Psoas muscle (tissue), 8 donors: ENCODE measurements at regions of chr2 and their contacts with region 1.

Region 1: GRCh38 chr2:74147727-74148456 is at the start of gene BOLA3:
- DNase-seq: peak; percentile 89 to 92
- ATAC-seq: peak; percentile 95 to 99 (median 98)
- H3K4me3 ChIP-seq: peak within 1 kb of the TSS; percentile 89
- H3K27ac ChIP-seq: peak within 1 kb of the TSS; percentile 70
- H3K4me1 ChIP-seq: peaks cover 13% of the 10 kb centered on the region
- H3K27me3 ChIP-seq: no peaks in the 10 kb centered on the region
- CTCF ChIP-seq: peak; percentile 66
- total RNA-seq, gene BOLA3: 47.7 to 65.9 (median 54.3) TPM

Region 2: DNA sequence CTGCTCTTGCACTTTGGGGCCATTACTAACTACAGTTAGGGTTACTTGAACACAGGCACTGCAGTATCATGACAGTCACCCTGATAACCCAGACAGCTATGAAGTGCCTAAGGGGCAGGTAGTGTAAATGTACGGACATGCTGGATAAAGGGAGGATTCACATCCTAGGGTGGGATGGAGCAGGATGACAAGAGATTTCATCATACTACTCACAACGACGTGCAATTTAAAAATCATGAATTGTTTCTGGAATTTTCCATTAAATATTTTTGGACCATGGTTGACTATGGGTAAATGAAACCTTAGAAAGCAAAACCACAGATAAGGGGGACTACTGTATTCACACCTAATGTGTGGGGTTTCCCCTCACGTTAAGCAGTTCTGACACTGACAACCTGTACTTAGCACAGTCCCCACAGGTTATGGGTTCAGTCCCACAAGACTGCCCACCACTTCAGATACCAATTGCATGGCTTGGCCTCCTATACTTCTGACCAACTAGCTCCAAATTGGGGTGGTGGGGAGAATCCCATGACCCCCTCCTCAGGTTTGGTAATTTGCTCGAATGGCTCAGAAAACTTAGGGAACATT is 581.5 kb before region 1 on chr2:
- intact Hi-C with region 1: no loop called
- DNase-seq: no peak
- ATAC-seq: no peak
- H3K4me3 ChIP-seq: no peak overlapping the region
- H3K27ac ChIP-seq: no peak overlapping the region
- H3K4me1 ChIP-seq: no peaks in the 10 kb centered on the region
- H3K27me3 ChIP-seq: no peaks in the 10 kb centered on the region
- CTCF ChIP-seq: no peak

Region 3: DNA sequence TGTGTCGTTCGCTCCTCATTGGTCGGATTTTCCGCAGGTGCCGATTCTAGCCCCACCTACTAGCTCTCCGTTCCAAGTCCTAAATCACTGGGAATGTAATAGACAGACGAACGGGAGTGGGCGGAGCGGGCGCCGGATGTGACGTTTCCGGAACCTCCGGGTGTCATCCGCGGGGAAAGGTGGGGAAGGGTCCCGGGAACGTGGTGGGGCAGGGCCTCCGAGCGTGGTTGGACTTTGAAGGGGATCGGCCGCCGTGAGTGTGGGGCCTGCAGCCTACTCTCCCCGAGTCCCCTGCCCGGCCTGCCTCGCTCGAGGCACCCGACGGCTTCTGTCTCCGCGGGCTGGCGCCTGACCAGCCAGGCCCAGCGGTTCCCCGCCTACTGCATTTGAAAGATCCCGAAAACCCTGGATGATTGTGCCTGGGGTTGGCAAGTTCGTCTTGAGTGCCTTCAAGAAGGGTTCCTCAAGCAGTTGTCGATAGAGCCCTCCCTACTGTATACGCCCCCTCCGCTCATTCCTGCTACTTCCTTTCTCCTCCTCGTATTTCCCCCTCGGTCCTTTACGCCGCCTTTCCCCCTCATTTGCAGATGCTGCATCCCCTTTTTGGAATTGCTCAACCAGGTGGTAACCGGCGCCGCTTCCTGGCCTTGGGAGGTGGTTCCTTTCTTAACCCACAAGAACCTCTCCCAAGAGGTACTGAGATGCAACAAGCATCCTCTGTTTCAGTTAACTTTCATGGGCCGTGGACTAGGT is 318.9 kb before region 1 on chr2 and contains the start of gene STAMBP:
- intact Hi-C with region 1: loop called in 1 of 2 experiments (anchors 10 kb)
- DNase-seq: peak; percentile 96 to 98
- ATAC-seq: peak; percentile 84 to 92 (median 90)
- H3K4me3 ChIP-seq: peak within 1 kb of the TSS; percentile 92
- H3K27ac ChIP-seq: peak within 1 kb of the TSS; percentile 99
- H3K4me1 ChIP-seq: peaks cover 44% of the 10 kb centered on the region
- H3K27me3 ChIP-seq: no peaks in the 10 kb centered on the region
- CTCF ChIP-seq: no peak
- total RNA-seq, gene STAMBP: 40.7 to 93.1 (median 57.8) TPM

Region 4: DNA sequence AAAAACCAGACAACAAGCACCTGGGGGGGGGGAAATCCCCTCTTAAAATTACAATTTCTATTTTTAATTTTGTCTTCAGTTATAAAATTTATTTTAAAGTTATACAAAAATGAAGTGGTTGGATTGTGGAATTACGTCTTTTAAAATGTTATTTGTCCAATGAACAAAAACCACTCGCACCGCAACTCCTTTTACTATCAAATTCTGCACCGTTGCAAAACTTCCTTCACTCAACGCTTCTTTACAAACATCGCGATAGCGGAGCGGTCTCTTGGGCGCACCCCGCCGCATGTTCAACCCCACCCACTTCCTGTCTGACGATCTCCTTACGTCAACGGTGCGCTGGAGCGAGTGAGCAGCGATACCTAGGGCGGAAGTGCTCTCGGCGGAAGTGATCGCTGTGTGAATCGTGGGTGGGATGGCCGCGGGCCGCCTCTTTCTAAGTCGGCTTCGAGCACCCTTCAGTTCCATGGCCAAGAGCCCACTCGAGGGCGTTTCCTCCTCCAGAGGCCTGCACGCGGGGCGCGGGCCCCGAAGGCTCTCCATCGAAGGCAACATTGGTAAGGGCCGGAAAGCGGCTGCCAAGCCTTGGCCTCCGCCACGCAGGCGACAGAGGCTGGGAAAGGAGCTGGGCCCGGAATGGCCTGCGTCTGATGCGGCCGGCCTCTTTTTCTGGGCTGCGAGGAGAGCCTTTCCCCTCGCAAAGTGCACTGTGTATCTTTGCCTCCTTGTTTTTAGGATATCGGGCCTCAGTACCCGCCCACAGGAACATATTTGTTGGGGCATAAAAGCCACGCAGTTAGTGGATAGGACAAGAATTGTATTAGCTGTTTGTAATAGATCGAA is 221.2 kb before region 1 on chr2 and contains the start of gene DGUOK:
- intact Hi-C with region 1: loop called in 1 of 2 experiments (anchors 10 kb)
- DNase-seq: peak; percentile 97 to 98
- ATAC-seq: peak; percentile 100
- H3K4me3 ChIP-seq: peak within 1 kb of the TSS; percentile 94
- H3K27ac ChIP-seq: peak within 1 kb of the TSS; percentile 94
- H3K4me1 ChIP-seq: peaks cover 21% of the 10 kb centered on the region
- H3K27me3 ChIP-seq: no peaks in the 10 kb centered on the region
- CTCF ChIP-seq: no peak
- total RNA-seq, gene DGUOK: 12.9 to 22.9 (median 20.7) TPM

Region 5: GRCh38 chr2:73939419-73939818 is 208.5 kb before region 1 on chr2:
- intact Hi-C with region 1: loop called in 1 of 2 experiments (anchors 5 kb)
- DNase-seq: peak in 1 of 2 donors; percentile 55
- ATAC-seq: peak; percentile 92 to 97 (median 96)
- H3K4me3 ChIP-seq: no peak overlapping the region
- H3K27ac ChIP-seq: peak overlapping the region; percentile 39
- H3K4me1 ChIP-seq: peaks cover 5% of the 10 kb centered on the region
- H3K27me3 ChIP-seq: no peaks in the 10 kb centered on the region
- CTCF ChIP-seq: peak; percentile 30

Region 6: DNA sequence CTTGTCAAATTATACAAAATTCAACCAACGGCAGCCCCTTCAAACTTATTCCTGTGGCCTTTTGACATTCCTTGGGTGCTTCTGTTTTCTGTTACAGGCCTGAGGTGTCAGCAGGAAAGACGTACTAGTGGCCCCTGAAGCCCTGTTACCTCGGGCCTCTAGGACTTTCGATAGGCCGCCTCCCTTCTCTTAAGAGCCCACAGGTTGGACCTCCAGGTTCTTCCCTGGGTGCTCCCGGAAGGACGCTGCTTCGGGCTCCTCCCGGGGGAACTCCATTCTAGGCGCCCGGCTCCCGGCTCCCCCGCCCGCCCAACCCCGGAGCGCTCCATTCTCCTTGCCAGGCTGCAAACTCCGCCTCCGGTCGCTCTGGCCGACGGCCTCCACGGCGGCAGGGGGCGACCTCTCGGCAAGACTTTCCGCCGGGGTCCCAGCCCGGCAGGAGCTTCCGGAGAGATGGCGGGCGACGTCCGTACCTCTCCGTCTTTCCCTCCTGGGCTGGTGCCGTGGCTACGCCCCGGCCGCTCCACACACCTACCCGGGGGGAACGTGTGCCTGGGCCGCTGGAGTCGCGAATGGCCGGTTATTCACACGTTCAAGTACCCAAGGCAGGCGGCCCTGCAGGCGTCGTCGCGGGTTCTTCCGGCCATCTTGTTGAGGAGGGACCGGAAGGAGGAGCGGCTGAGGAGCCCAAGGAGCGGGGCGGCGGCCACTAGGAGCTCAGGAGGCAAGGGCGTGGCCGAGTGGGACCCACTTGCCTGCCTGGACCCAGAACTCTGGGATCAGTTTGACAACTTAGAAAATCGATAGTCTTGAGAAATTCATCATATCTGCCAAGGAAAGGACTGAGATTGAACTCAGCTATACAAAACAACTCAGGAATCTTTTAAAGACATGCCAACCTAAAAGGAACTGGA is 27.7 kb before region 1 on chr2:
- intact Hi-C with region 1: loop called in 1 of 2 experiments (anchors 2 kb)
- DNase-seq: peak; percentile 81 to 82
- ATAC-seq: peak; percentile 86 to 97 (median 95)
- H3K4me3 ChIP-seq: peak overlapping the region; percentile 72
- H3K27ac ChIP-seq: peak overlapping the region; percentile 58
- H3K4me1 ChIP-seq: no peaks in the 10 kb centered on the region
- H3K27me3 ChIP-seq: no peaks in the 10 kb centered on the region
- CTCF ChIP-seq: peak; percentile 45

Region 7: DNA sequence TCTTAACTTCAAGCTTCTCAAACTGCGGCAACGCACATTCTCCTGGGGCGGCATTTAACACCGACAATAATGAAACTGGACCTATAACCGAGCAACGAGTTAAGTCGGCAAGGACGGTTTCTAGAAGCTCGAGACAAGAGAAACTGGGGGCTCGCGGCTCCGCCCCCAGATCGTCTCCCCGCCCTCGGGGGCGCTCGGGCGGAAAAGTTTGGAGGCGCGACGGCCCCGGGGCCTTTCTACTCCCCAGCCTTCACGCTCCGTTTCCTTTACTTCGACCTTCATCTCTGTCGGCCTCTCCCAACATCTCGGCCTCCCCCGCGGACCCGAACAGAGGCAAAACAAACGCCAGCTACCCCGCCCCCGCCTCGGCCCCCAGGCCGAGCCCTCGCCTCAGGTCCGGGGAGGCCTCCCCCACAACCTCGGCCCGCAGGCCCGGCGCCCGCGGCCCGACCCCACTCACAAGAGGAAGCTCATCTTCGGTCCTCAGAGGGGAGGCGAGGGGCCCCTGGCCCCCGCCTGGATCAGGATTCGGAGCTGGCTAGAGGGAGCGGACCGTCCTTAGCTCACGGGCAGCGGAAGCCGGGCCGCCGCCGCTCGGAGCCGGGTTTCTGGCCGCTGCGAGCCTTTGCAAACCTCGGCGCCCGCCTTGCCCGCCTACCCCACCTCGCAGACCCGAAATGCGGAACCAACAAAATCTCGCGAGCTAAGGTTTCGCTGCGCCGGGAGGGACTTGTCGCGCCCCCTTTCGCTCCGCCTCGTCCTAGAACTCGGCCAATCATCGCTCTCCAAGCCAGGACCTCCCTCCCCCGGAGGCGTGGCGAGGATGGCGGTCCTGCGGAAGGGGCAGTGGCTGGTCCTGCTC is 30.5 kb after region 1 on chr2 and contains the start of gene MOB1A:
- intact Hi-C with region 1: loop called in 1 of 2 experiments (anchors 2 kb)
- DNase-seq: peak; percentile 97 to 98
- ATAC-seq: peak; percentile 99
- H3K4me3 ChIP-seq: peak within 1 kb of the TSS; percentile 78
- H3K27ac ChIP-seq: peak within 1 kb of the TSS; percentile 79
- H3K4me1 ChIP-seq: peaks cover 23% of the 10 kb centered on the region
- H3K27me3 ChIP-seq: no peaks in the 10 kb centered on the region
- CTCF ChIP-seq: no peak
- total RNA-seq, gene MOB1A: 28.0 to 44.3 (median 28.9) TPM

Region 8: DNA sequence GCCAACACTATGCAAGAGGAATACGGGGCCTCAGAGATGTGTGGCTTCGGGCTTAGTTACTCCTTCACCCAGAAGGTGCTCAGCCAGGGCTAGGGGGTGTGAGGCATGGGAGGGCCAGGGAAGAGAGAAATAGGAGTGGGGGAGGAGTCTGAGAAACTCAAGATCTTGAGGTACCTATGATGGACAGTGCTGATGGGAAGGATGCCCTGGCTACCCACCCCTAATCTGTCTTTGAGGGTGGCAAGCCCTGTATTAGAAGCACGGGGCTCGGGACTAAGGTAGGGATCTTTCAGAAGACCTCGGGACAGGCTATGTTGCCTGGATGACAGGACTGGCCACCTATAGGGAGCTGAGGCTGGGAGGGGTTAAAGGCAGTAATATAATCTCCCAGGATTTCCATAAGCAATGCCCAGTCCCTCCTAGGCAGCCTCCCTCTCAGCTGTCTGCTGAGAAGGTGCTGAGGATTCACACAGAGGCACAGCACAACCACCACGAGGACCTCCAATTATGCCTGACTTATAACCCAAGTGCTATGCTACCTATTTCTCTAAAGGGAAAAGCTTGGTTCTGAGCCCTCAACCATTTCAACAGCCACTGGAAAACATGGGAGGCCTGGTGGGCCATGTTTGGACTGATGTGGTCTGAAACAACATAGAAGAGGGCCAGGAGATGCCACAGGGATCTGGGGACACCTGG is 73.9 kb after region 1 on chr2:
- intact Hi-C with region 1: no loop called
- DNase-seq: no peak
- ATAC-seq: no peak
- H3K4me3 ChIP-seq: no peak overlapping the region
- H3K27ac ChIP-seq: no peak overlapping the region
- H3K4me1 ChIP-seq: peaks cover 8% of the 10 kb centered on the region
- H3K27me3 ChIP-seq: no peaks in the 10 kb centered on the region
- CTCF ChIP-seq: no peak

Region 9: DNA sequence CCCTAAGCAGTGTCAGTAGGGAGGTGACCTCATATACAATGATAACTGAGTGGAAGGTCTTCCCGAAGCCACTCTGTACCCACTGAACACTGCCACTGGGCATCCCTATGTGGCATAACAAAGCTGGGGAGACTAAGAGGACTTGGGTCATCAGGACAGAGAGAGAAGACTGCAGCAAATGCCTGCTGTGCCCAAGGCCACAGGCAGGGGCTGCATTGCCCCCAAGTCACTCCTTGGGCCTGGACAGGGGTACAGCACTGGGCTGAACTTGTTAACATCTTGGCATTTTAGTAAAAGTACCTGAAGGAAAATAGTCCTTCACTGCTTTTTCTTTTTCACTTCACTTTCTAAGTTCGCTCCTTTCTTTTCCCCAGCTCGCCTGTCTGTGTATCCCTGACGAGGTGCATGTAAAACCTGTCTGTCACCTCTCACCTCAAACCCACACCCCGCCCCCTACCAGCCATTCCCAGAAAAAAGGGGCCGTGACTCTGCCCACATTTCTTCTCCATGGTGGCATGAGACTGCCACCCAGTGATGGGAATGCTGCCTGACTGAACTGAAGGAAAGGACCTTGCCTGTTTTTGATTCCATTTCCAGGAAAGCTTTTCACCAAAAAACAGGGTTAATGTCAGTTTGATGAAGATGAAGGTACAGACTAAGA is 113.4 kb after region 1 on chr2:
- intact Hi-C with region 1: loop called in 1 of 2 experiments (anchors 10 kb)
- DNase-seq: no peak
- ATAC-seq: peak in 3 of 4 donors; percentile 48 to 74 (median 67)
- H3K4me3 ChIP-seq: no peak overlapping the region
- H3K27ac ChIP-seq: no peak overlapping the region
- H3K4me1 ChIP-seq: no peaks in the 10 kb centered on the region
- H3K27me3 ChIP-seq: no peaks in the 10 kb centered on the region
- CTCF ChIP-seq: peak; percentile 51